Activated CD8-positive, alpha-beta T cell treated with anti-CD3 and anti-CD28 coated beads for 36 hours (primary cell): ENCODE measurements at regions of chr12 and their contacts with region 1.

Region 1: DNA sequence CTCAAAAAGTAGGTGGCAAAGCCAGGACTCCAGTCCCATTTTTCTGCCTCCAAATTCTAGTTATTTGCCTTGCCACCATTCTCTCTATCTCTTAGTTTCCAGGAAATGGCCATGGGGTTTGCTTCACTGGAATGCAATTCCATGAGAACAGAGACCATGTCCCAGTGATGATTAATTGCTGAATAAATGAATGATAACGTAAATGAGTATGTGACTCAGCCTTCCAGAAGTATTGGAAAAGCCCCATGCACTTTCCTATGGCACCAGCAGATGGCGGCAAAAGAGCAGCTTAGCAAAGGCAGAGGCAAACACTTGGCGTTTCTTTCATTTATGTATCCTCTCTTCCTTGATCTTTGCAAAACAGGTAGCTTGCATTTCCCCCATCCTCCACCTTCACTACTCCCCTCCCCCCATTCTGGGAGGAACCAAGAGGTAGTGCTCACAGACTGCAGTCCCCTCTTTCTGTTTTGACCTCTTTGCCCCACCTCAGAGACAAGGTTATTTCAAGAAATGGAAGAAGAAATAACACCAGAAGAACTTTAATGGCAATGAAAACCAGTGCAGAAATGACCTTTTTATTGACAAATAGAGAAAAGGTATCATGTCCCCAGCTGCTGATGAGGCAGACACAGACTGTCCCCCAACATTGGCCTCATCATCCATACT is 21.3 kb downstream of the TBX3 start:
- DNase-seq: peak; percentile 82
- ATAC-seq: peak; percentile 56
- H3K4me3 Mint-ChIP-seq: no peak overlapping the region
- H3K27ac Mint-ChIP-seq: no peak overlapping the region
- H3K4me1 Mint-ChIP-seq: no peaks in the 10 kb centered on the region
- H3K27me3 Mint-ChIP-seq: peaks cover 41% of the 10 kb centered on the region
- CTCF ChIP-seq: peak; percentile 87

Region 2: DNA sequence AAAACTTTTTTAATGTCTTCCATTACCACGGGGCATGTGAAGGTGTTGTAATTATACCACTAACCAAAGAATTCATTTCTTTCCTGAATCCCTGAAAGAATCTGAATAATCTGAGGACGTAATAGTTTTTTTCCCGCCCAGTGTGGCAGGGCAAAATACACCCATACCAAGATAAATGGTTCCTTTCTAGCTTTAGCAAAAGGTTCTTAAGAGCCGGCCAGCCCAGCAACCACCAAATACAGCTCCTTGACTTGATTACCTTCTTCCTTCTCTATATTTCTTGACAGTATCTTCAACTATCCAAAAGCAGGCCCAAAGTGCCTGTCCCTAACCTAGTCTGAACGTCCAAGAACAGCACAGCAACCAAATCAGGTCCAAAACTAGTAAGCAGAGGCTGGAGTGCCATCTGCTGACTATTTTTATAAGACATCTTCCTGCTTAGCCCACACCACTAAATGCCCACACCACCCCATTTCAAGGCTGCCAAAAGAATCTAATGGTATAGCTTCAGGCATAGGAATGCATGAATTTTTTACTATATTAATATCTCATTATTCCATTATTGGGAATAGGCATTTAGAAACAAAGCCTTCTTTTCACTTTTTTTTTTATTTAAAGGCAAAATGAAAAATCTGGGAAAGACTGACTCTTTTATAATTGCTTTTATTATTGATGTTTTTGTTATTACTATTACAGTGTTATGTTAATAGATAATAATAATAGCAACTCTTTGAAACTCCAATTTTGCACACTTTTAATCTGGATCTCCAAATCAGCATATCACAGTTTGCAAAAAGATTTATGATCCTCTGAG is 1090.5 kb after region 1 on chr12:
- CTCF ChIA-PET with region 1: no interaction called
- POLR2A ChIA-PET with region 1: no interaction called
- intact Hi-C with region 1: loop called (anchors 5 kb)
- DNase-seq: peak; percentile 18
- ATAC-seq: no peak
- H3K4me3 Mint-ChIP-seq: no peak overlapping the region
- H3K27ac Mint-ChIP-seq: no peak overlapping the region
- H3K4me1 Mint-ChIP-seq: no peaks in the 10 kb centered on the region
- H3K27me3 Mint-ChIP-seq: peaks cover 15% of the 10 kb centered on the region
- CTCF ChIP-seq: peak; percentile 31

Region 3: GRCh38 chr12:115916910-115917668 is 1254.4 kb after region 1 on chr12:
- CTCF ChIA-PET with region 1: interaction called, 10 read pairs
- POLR2A ChIA-PET with region 1: no interaction called
- intact Hi-C with region 1: loop called (anchors 2 kb)
- DNase-seq: peak; percentile 75
- ATAC-seq: peak; percentile 88
- H3K4me3 Mint-ChIP-seq: no peak overlapping the region
- H3K27ac Mint-ChIP-seq: no peak overlapping the region
- H3K4me1 Mint-ChIP-seq: no peaks in the 10 kb centered on the region
- H3K27me3 Mint-ChIP-seq: peaks cover 21% of the 10 kb centered on the region
- CTCF ChIP-seq: peak; percentile 97